ENCODE measurements at regions of chr9 and their contacts with region 1.

Region 1: GRCh38 chr9:121621113-121621449 is 30.4 kb upstream of the DAB2IP start:
- DNase-seq: peak; percentile 56 to 67
- ATAC-seq: peak; percentile 79 to 93
- H3K4me3 ChIP-seq: no peak overlapping the region
- H3K27ac ChIP-seq: no peak overlapping the region
- H3K4me1 ChIP-seq: peaks cover 9% of the 10 kb centered on the region; the same call in 2 of the 3 replicates
- CTCF ChIP-seq: peak; percentile 47
- EP300 ChIP-seq: no peak
- POLR2A ChIP-seq: no peak
- RAD21 ChIP-seq: peak; percentile 53 to 60

Region 2: GRCh38 chr9:121609845-121610570 is 11.1 kb before region 1 on chr9:
- CTCF ChIA-PET with region 1: interaction called, 19 read pairs
- POLR2A ChIA-PET with region 1: no interaction called
- DNase-seq: peak; percentile 80 to 83
- ATAC-seq: peak; percentile 89 to 93
- H3K4me3 ChIP-seq: no peak overlapping the region
- H3K27ac ChIP-seq: peak overlapping the region in 1 of 2 experiments; percentile 20; a peak in 3 of 6 replicates
- H3K4me1 ChIP-seq: peaks cover 41% of the 10 kb centered on the region
- CTCF ChIP-seq: no peak
- EP300 ChIP-seq: no peak
- POLR2A ChIP-seq: no peak
- RAD21 ChIP-seq: no peak